GM12878 (cell line): ENCODE measurements at regions of chr15 and their contacts with region 1.

Region 1: DNA sequence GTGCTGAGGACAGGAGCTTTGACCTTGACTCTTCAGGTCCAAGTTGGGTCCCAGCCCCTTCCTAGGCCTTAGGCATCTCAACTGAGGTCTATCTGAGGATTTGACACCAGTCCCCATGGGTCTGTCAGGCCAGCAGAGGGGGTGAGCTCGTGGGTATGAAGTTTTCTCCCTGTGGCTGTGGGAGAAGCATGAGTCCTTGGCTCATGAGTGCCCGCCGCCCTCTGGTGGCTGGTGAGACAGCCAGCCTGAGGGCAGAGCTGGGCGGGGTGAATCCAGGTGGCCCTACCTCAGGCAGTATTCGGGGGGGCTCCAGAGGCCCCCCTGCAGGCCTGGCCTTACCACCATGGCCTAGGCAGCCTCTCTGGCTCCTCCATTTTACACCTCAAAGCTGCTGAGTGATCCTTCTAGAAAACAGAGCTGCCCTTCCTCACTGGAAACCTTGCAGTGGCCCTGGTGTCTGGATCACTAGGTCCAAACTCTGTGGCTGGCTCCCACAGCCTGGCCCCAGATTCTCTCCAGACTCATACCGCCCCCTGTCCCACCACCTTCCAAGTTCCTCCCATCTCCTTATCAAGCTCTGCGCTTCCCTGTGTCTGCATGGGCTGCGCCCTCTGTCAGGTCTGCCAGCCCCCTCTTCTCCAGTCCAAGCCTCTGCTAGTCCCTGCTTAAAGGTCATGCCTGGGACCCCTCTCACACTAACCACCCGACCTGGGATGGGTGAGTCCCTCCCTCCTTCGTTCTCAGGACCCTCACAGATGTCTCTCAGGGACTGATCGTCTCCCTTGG is 16.1 kb downstream of the SH2D7 start:
- DNase-seq: peak; percentile 43
- ATAC-seq: peak; percentile 84
- H3K4me3 ChIP-seq: no peak overlapping the region
- H3K27ac ChIP-seq: no peak overlapping the region
- H3K4me1 ChIP-seq: peaks cover 22% of the 10 kb centered on the region
- H3K27me3 ChIP-seq: no peaks in the 10 kb centered on the region
- CTCF ChIP-seq: peak; percentile 89 to 97 (median 94)
- EP300 ChIP-seq: no peak
- POLR2A ChIP-seq: no peak
- RAD21 ChIP-seq: peak; percentile 77

Region 2: DNA sequence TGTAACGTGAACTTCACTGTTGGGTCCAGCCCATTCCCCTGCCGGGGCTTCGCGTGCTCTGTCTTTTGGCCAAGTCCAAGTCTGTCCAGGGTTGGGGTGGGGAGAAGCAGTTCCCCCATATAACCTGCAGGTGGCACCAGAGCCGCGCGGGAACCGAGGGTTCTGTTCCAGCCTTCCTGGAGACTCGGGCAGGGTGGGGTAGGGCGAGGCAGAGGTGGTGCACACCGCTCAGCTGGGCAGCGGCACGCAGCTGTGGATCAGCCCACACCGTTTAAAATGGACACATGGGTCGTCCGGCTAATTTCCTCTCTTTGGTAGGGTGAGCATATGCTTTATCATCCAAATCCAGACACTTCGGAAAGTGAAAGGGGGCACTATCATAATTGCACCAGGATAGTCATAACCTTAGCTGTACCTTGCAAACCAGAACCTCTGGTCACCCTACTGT is 149.0 kb before region 1 on chr15:
- CTCF ChIA-PET with region 1: interaction called, 327 read pairs
- POLR2A ChIA-PET with region 1: interaction called, 3 read pairs
- RAD21 ChIA-PET with region 1: interaction called, 157 read pairs
- SMC1A ChIA-PET with region 1: interaction called, 184 read pairs
- in situ Hi-C with region 1: no loop called
- intact Hi-C with region 1: loop called (anchors 1 kb)
- DNase-seq: peak; percentile 13
- ATAC-seq: peak; percentile 98
- H3K4me3 ChIP-seq: peak overlapping the region; percentile 39; the same call in 1 of the 2 replicates
- H3K27ac ChIP-seq: no peak overlapping the region
- H3K4me1 ChIP-seq: peaks cover 6% of the 10 kb centered on the region
- H3K27me3 ChIP-seq: no peaks in the 10 kb centered on the region
- CTCF ChIP-seq: peak; percentile 93 to 98 (median 95)
- EP300 ChIP-seq: no peak
- POLR2A ChIP-seq: no peak
- RAD21 ChIP-seq: peak; percentile 93

Region 3: DNA sequence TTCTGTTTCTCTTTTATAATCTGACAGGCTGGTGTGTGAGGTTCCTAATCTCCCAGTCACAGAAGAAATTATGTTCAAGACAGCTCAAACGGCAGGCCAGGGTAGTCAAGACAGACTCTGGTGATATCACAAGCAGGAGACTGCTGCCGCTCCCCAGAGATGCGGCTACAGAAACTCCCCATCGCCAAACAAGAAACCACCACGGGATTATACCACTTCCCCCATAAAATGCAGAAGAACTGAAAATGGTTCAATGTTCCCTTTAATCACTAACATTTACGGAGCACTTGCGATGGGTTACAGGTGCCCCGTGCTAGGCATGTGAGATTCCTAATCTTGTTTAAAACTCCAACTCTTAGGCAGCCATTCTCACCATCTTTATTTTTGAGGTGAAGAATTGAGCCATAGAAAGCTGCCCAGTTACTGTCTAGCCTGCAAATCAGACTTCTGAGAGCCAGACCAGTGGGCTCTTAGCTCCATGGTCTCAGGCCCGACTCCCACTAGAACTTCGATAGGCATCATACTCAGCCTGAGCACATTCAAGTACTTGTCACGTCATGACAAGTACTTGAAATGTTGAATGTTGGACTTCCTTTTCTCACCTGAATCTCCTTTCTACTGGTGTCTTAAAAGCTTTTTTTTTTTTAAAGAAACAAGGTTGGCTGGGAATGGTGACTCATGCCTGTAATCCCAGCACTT is 89.4 kb before region 1 on chr15:
- CTCF ChIA-PET with region 1: interaction called, 17 read pairs
- POLR2A ChIA-PET with region 1: interaction called, 4 read pairs
- RAD21 ChIA-PET with region 1: interaction called, 31 read pairs
- SMC1A ChIA-PET with region 1: interaction called, 11 read pairs
- in situ Hi-C with region 1: no loop called
- intact Hi-C with region 1: no loop called
- DNase-seq: no peak
- ATAC-seq: peak; percentile 97
- H3K4me3 ChIP-seq: no peak overlapping the region
- H3K27ac ChIP-seq: peak overlapping the region; percentile 60
- H3K4me1 ChIP-seq: peaks cover 7% of the 10 kb centered on the region
- H3K27me3 ChIP-seq: no peaks in the 10 kb centered on the region
- CTCF ChIP-seq: no peak
- EP300 ChIP-seq: no peak
- POLR2A ChIP-seq: no peak
- RAD21 ChIP-seq: no peak

Region 4: DNA sequence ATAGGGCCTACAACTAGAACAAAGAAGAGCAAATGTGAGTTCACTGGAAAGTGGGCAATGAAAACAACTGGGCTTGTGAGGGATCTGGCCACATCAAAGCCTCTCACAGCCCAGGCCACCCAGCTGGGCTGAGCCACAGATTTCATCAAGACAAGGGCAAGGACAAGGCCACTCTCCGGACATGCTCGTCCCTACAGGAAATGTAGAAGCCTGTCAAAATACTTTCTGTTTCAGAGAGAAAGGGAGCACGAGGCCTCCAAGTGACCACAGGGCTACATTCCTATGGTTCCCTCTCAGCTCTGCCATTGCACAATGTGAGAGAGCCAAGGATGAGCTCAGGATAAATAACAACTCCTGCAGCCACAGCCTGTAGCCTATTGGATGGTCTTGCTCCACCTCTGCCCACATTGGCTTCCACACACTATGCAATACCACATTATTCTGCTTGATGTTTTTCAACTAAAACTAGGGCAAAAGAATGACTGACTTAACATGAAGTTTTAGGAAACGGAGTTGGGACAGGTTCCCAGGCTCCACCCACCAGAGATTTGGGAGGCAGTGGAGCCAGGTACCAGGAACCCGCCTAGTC is 43.1 kb before region 1 on chr15:
- CTCF ChIA-PET with region 1: interaction called, 191 read pairs
- POLR2A ChIA-PET with region 1: interaction called, 11 read pairs
- RAD21 ChIA-PET with region 1: interaction called, 34 read pairs
- SMC1A ChIA-PET with region 1: interaction called, 131 read pairs
- in situ Hi-C with region 1: no loop called
- intact Hi-C with region 1: loop called (anchors 5 kb)
- DNase-seq: no peak
- ATAC-seq: peak; percentile 14
- H3K4me3 ChIP-seq: peak overlapping the region; percentile 69
- H3K27ac ChIP-seq: peak overlapping the region; percentile 89
- H3K4me1 ChIP-seq: peaks cover 70% of the 10 kb centered on the region
- H3K27me3 ChIP-seq: no peaks in the 10 kb centered on the region
- CTCF ChIP-seq: no peak
- EP300 ChIP-seq: no peak
- POLR2A ChIP-seq: no peak
- RAD21 ChIP-seq: no peak

Region 5: DNA sequence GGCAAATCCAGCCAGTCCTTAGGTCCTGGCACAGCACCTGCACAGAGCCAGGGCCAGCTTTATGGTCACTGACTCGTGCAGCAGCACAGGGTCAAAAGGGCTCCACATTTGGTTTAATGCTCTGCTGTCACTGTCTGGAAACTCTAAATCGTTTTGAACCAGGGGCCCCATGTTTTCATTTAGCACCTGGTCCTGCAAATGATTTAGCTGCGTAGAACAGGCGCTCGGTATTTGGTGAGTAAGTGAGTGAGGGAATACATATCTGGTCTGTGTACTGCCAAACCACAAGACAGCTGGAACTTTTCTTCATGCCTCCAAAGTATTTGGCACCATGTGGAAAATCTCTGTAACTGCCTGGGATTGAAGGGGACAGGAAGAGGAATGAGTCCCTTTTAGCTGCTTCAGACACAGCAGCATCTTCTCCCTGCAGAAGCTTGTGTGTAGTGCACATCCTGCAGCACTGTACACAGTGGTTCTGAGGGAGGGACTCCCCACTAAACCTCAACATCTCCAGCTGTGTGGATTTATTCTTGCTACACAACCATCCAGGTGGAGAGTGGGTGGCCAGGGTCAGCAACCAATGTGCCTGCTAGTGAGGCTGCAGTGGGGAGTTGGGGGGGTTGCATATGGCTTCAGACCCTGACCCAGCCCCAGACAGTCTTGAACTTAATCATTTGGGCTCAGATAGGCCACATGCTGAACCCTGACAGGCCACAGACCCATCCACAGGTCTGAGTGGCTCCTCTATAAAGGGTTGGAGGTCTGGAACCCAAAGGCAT is 15.1 kb before region 1 on chr15:
- CTCF ChIA-PET with region 1: interaction called, 11 read pairs
- POLR2A ChIA-PET with region 1: no interaction called
- RAD21 ChIA-PET with region 1: interaction called, 11 read pairs
- SMC1A ChIA-PET with region 1: interaction called, 9 read pairs
- in situ Hi-C with region 1: no loop called
- intact Hi-C with region 1: no loop called
- DNase-seq: no peak
- ATAC-seq: no peak
- H3K4me3 ChIP-seq: no peak overlapping the region
- H3K27ac ChIP-seq: no peak overlapping the region
- H3K4me1 ChIP-seq: peaks cover under 1% of the 10 kb centered on the region; the same call in 1 of the 2 replicates
- H3K27me3 ChIP-seq: no peaks in the 10 kb centered on the region
- CTCF ChIP-seq: no peak
- EP300 ChIP-seq: no peak
- POLR2A ChIP-seq: no peak
- RAD21 ChIP-seq: no peak

Region 6: GRCh38 chr15:78241007-78241406 is 132.5 kb after region 1 on chr15:
- CTCF ChIA-PET with region 1: interaction called, 164 read pairs
- POLR2A ChIA-PET with region 1: no interaction called
- RAD21 ChIA-PET with region 1: interaction called, 44 read pairs
- SMC1A ChIA-PET with region 1: interaction called, 51 read pairs
- in situ Hi-C with region 1: loop called (anchors 5 kb)
- intact Hi-C with region 1: loop called (anchors 1 kb)
- DNase-seq: no peak
- ATAC-seq: peak; percentile 99
- H3K4me3 ChIP-seq: no peak overlapping the region
- H3K27ac ChIP-seq: no peak overlapping the region
- H3K4me1 ChIP-seq: no peaks in the 10 kb centered on the region
- H3K27me3 ChIP-seq: no peaks in the 10 kb centered on the region
- CTCF ChIP-seq: peak; percentile 84 to 93 (median 88)
- EP300 ChIP-seq: no peak
- POLR2A ChIP-seq: no peak
- RAD21 ChIP-seq: peak; percentile 86

Region 7: GRCh38 chr15:78276064-78276943 is 167.8 kb after region 1 on chr15:
- CTCF ChIA-PET with region 1: no interaction called
- POLR2A ChIA-PET with region 1: no interaction called
- RAD21 ChIA-PET with region 1: no interaction called
- SMC1A ChIA-PET with region 1: no interaction called
- in situ Hi-C with region 1: no loop called
- intact Hi-C with region 1: no loop called
- DNase-seq: no peak
- ATAC-seq: no peak
- H3K4me3 ChIP-seq: no peak overlapping the region
- H3K27ac ChIP-seq: no peak overlapping the region
- H3K4me1 ChIP-seq: no peaks in the 10 kb centered on the region
- H3K27me3 ChIP-seq: no peaks in the 10 kb centered on the region
- CTCF ChIP-seq: no peak
- EP300 ChIP-seq: no peak
- POLR2A ChIP-seq: no peak
- RAD21 ChIP-seq: no peak

Region 8: DNA sequence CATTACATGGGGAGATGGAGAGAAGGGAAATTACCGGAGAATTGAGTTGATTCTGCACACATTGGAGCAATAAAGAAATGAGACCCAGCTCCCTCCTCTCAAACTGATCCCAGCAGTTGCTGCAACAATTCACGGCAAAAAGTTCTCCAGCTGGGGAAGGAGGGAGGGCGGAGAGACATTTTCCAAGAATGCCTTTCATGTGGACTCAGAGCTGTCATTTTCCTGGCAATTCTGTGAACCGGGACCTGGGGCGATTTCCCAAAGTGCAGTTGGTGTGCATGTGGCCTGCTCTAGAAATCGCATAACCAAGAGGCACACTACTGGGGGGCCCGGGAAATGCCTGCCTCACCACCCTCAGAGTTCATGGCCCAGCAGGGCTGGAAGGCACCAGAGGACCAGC is 280.8 kb after region 1 on chr15:
- CTCF ChIA-PET with region 1: no interaction called
- POLR2A ChIA-PET with region 1: no interaction called
- RAD21 ChIA-PET with region 1: no interaction called
- SMC1A ChIA-PET with region 1: no interaction called
- in situ Hi-C with region 1: no loop called
- intact Hi-C with region 1: no loop called
- DNase-seq: no peak
- ATAC-seq: no peak
- H3K4me3 ChIP-seq: no peak overlapping the region
- H3K27ac ChIP-seq: no peak overlapping the region
- H3K4me1 ChIP-seq: no peaks in the 10 kb centered on the region
- H3K27me3 ChIP-seq: peaks cover 0 to 1% of the 10 kb centered on the region in 2 experiments; a peak in 2 of 4 replicates
- CTCF ChIP-seq: no peak
- EP300 ChIP-seq: no peak
- POLR2A ChIP-seq: no peak
- RAD21 ChIP-seq: no peak

Region 9: GRCh38 chr15:78714890-78715289 is 606.4 kb after region 1 on chr15:
- CTCF ChIA-PET with region 1: no interaction called
- POLR2A ChIA-PET with region 1: no interaction called
- RAD21 ChIA-PET with region 1: no interaction called
- SMC1A ChIA-PET with region 1: interaction called, 3 read pairs
- in situ Hi-C with region 1: loop called (anchors 10 kb)
- intact Hi-C with region 1: no loop called
- DNase-seq: no peak
- ATAC-seq: no peak
- H3K4me3 ChIP-seq: no peak overlapping the region
- H3K27ac ChIP-seq: no peak overlapping the region
- H3K4me1 ChIP-seq: no peaks in the 10 kb centered on the region
- H3K27me3 ChIP-seq: no peaks in the 10 kb centered on the region
- CTCF ChIP-seq: no peak
- EP300 ChIP-seq: no peak
- POLR2A ChIP-seq: no peak
- RAD21 ChIP-seq: no peak